ENCODE measurements at regions of chr12 and their contacts with region 1.

Region 1: DNA sequence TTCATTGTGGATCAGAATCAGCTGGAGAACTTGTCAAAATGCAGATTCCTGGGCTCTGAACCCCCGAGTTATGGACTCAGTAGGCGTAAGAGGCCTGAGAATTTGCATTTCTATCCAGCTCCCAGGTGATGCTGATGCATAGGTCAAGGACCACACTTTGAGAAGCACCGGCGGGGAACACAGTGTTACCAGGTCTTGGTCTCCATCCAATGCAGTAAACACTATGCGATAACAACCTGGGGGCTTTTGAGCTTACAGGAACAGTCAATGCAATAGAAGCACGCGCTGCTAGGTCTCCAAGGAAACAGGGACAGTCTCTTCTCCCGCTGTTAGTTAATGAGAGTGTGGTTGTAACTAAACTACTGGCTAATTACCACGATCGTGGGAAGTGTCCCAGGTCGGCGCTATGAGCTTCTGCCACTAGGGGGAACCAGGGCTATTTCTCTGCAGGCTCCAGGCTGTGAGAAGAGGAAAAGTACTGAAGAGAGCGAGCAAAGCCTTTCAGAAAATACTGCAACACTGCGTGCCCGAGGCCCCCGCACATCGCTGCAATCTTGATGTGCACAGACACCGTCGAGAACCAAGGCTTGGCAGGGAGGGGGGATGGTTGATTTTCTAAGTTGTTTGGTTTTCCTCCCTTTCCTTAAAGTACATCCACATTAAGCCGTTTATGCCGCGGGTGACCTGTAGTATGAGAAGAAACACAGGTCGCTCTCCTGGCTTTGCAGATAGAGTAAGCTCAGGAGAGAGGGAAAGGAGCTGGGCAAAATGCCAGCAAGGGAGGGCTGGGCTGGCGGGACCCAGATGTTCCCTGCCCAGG is 52.0 kb upstream of the KCNA1 start:
- DNase-seq: peak; percentile 39
- ATAC-seq: peak; percentile 80
- H3K4me3 ChIP-seq: no peak overlapping the region
- H3K27ac ChIP-seq: no peak overlapping the region
- H3K4me1 ChIP-seq: peaks cover 0 to 3% of the 10 kb centered on the region in 2 experiments; a peak in 1 of 4 replicates
- H3K27me3 ChIP-seq: peaks cover 28% of the 10 kb centered on the region
- CTCF ChIP-seq: peak; percentile 58 to 94 (median 86)
- POLR2A ChIP-seq: no peak
- RAD21 ChIP-seq: peak; percentile 57

Region 2: DNA sequence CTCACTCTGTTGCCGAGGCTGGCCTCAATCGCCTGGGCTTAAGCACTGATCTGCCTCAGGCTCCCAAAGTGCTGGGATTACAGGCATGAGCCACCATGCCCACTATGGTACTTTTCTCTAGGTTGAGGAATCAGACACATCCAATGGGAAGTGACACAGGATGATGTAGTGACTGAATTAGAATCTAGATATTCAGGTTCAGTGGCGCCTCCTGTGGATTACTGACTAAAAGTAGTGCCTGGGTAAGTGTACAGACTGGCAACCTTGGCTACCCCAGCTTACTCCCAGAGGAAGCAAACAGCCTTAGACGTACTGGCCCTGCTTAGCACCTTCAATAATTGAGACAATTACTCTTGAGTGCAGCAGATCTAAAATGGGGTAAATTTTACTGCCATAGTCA is 114.6 kb before region 1 on chr12:
- CTCF ChIA-PET with region 1: no interaction called
- POLR2A ChIA-PET with region 1: no interaction called
- RAD21 ChIA-PET with region 1: no interaction called
- intact Hi-C with region 1: no loop called
- DNase-seq: no peak
- ATAC-seq: peak; percentile 47
- H3K4me3 ChIP-seq: no peak overlapping the region
- H3K27ac ChIP-seq: no peak overlapping the region
- H3K4me1 ChIP-seq: no peaks in the 10 kb centered on the region
- H3K27me3 ChIP-seq: peaks cover 10% of the 10 kb centered on the region
- CTCF ChIP-seq: no peak
- POLR2A ChIP-seq: no peak
- RAD21 ChIP-seq: no peak

Region 3: GRCh38 chr12:4991373-4991772 is 133.7 kb after region 1 on chr12:
- CTCF ChIA-PET with region 1: interaction called, 10 read pairs
- POLR2A ChIA-PET with region 1: no interaction called
- RAD21 ChIA-PET with region 1: no interaction called
- intact Hi-C with region 1: no loop called
- DNase-seq: no peak
- ATAC-seq: no peak
- H3K4me3 ChIP-seq: no peak overlapping the region
- H3K27ac ChIP-seq: no peak overlapping the region
- H3K4me1 ChIP-seq: no peaks in the 10 kb centered on the region
- H3K27me3 ChIP-seq: peaks cover 98% of the 10 kb centered on the region
- CTCF ChIP-seq: no peak
- POLR2A ChIP-seq: no peak
- RAD21 ChIP-seq: no peak

Region 4: GRCh38 chr12:4997939-4998338 is 140.3 kb after region 1 on chr12:
- CTCF ChIA-PET with region 1: interaction called, 25 read pairs
- POLR2A ChIA-PET with region 1: no interaction called
- RAD21 ChIA-PET with region 1: interaction called, 5 read pairs
- intact Hi-C with region 1: loop called (anchors 1 kb)
- DNase-seq: no peak
- ATAC-seq: peak; percentile 67
- H3K4me3 ChIP-seq: no peak overlapping the region
- H3K27ac ChIP-seq: no peak overlapping the region
- H3K4me1 ChIP-seq: peaks cover 3 to 11% of the 10 kb centered on the region in 2 experiments; a peak in 3 of 4 replicates
- H3K27me3 ChIP-seq: peaks cover 43% of the 10 kb centered on the region
- CTCF ChIP-seq: no peak
- POLR2A ChIP-seq: no peak
- RAD21 ChIP-seq: no peak

Region 5: DNA sequence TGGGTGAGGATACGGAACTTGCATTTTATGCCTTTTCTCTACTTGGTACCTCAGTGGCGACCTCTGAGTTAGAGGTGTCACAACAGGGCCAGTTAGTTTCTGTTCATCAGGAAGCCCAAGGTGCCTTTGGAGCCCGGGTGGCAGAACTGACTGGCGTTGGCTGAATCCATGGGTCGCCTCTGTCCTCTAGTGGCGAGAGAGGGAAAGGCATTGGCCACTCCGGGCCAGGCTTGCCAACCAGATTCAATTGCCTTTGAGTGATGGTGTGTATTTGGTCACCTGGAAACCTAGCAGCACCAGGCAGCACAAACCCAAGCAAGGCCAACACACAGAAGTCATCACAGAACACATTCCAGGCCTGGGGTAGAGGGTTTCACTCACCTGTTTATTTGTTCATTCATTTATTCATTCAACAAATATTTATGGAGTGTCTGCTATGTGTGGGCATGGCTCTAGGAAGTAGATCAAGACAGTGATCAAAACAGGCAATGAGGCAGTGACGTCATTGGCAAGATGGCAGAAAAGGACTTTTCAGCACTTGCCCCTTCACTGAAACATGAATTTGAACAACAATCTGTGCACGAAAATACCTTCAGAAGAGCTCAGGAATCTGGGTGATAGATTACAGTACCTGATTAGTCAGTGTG is 145.5 kb after region 1 on chr12:
- CTCF ChIA-PET with region 1: interaction called, 25 read pairs
- POLR2A ChIA-PET with region 1: no interaction called
- RAD21 ChIA-PET with region 1: interaction called, 5 read pairs
- intact Hi-C with region 1: loop called (anchors 1 kb)
- DNase-seq: peak; percentile 43
- ATAC-seq: peak; percentile 96
- H3K4me3 ChIP-seq: no peak overlapping the region
- H3K27ac ChIP-seq: no peak overlapping the region
- H3K4me1 ChIP-seq: peaks cover 0 to 3% of the 10 kb centered on the region in 2 experiments; a peak in 2 of 4 replicates
- H3K27me3 ChIP-seq: peaks cover 17% of the 10 kb centered on the region
- CTCF ChIP-seq: peak; percentile 82 to 98 (median 97)
- POLR2A ChIP-seq: no peak
- RAD21 ChIP-seq: peak; percentile 88

Region 6: DNA sequence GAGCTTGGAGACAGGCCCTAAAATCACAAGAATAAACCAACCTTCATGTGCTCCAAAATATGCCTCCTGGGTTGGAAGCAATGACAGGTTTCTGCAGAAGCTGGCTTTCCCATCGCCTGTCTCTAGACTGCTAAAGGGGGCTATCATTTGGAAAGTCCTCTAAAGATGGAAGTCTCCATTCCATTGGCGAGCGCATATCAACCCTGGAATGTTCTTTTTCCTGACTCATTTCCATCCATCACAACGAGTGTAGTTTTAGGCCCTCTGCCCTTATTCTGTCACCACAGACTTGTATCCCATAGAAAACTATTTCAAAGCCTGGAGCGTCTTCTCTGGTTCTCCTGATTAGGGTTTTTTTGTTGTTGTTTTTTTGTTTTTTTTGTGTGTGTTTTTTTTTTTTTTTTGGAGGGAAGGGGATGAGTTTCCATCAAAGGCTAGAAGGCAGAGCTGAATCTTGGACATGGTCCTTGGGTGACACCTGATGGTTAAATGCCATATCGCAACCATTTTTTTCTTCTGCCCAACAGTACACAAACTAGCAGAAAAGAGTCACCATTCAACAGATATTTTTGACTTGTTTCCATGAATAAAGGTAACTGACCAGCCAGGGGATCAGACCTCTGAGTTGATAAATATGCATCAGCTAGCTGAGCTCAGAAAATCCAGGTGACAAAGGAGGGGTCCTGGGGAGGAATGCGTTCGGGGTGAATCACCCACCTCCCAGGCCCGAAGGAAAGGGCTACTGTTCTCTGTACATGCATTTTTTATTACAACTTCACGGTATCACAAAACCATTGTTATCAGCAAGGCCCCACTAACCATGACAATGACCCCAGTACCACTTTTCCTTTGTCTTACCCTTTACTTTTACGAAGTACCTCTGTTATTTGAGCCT is 226.5 kb after region 1 on chr12:
- CTCF ChIA-PET with region 1: interaction called, 13 read pairs
- POLR2A ChIA-PET with region 1: no interaction called
- RAD21 ChIA-PET with region 1: no interaction called
- intact Hi-C with region 1: loop called (anchors 2 kb)
- DNase-seq: peak; percentile 28
- ATAC-seq: no peak
- H3K4me3 ChIP-seq: no peak overlapping the region
- H3K27ac ChIP-seq: no peak overlapping the region
- H3K4me1 ChIP-seq: peaks cover 0 to 9% of the 10 kb centered on the region in 2 experiments; a peak in 1 of 4 replicates
- H3K27me3 ChIP-seq: peaks cover 42% of the 10 kb centered on the region; the same call in 1 of the 2 replicates
- CTCF ChIP-seq: peak; percentile 48 to 74 (median 63); a peak in 5 of 6 replicates
- POLR2A ChIP-seq: no peak
- RAD21 ChIP-seq: peak; percentile 62

Region 7: GRCh38 chr12:5442251-5443006 is 584.7 kb after region 1 on chr12:
- CTCF ChIA-PET with region 1: no interaction called
- POLR2A ChIA-PET with region 1: no interaction called
- RAD21 ChIA-PET with region 1: no interaction called
- intact Hi-C with region 1: loop called (anchors 5 kb)
- DNase-seq: peak; percentile 39
- ATAC-seq: peak; percentile 90
- H3K4me3 ChIP-seq: no peak overlapping the region
- H3K27ac ChIP-seq: no peak overlapping the region
- H3K4me1 ChIP-seq: peaks cover 0 to 13% of the 10 kb centered on the region in 2 experiments; a peak in 3 of 4 replicates
- H3K27me3 ChIP-seq: peaks cover 44% of the 10 kb centered on the region
- CTCF ChIP-seq: peak; percentile 64 to 76 (median 75)
- POLR2A ChIP-seq: no peak
- RAD21 ChIP-seq: peak; percentile 85